Activated CD4-positive, alpha-beta T cell treated with anti-CD3 and anti-CD28 coated beads for 36 hours (primary cell): ENCODE measurements at regions of chr21 and their contacts with region 1.

Region 1: GRCh38 chr21:35045542-35046262 is 3.4 kb downstream of the RUNX1 start:
- DNase-seq: peak; percentile 64
- ATAC-seq: no peak
- H3K4me3 Mint-ChIP-seq: peak overlapping the region; percentile 87
- H3K27ac Mint-ChIP-seq: peak overlapping the region; percentile 95
- H3K4me1 Mint-ChIP-seq: peaks cover 79% of the 10 kb centered on the region
- H3K27me3 Mint-ChIP-seq: no peaks in the 10 kb centered on the region

Region 2: DNA sequence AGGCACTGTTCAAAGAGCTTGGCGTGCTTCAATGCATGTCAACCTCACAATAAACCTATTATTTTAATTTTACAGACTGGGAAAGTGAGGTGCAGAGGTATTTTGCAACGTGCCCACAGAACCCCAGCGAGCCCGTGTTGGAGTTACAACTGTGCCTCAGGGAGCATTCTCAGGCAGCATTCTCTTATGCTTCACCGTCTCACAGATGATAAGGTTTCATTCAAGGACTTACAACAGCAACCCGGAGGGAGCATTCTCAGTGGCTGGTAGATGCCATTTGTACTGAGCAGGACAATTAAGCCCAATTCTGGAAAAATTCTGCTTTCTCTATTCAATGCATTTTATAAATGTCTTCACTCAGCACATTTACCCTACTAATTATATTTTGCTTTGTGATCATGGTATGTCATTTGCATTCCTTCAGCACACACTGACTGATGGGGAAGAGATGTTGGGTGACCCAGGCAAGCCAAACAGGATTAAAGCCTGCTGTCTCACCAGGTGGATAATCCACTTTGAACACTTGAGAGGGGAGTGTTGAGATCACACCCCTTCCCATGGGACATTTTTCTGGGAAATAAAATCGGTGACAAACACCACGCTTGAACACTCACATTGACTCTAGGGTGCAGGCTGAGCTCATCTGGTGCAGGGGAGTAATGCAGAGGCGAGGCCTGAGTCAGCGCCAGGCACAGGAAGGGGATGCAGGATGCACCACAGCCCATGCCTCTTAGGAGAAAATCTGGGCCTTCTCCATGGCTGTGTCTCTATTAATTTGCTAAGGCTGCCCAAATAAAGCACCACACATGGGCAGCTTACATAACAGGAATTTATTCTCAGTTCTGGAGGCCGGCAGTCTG is 263.0 kb before region 1 on chr21:
- CTCF ChIA-PET with region 1: no interaction called
- POLR2A ChIA-PET with region 1: no interaction called
- intact Hi-C with region 1: no loop called
- DNase-seq: no peak
- ATAC-seq: no peak
- H3K4me3 Mint-ChIP-seq: no peak overlapping the region
- H3K27ac Mint-ChIP-seq: no peak overlapping the region
- H3K4me1 Mint-ChIP-seq: no peaks in the 10 kb centered on the region
- H3K27me3 Mint-ChIP-seq: no peaks in the 10 kb centered on the region

Region 3: DNA sequence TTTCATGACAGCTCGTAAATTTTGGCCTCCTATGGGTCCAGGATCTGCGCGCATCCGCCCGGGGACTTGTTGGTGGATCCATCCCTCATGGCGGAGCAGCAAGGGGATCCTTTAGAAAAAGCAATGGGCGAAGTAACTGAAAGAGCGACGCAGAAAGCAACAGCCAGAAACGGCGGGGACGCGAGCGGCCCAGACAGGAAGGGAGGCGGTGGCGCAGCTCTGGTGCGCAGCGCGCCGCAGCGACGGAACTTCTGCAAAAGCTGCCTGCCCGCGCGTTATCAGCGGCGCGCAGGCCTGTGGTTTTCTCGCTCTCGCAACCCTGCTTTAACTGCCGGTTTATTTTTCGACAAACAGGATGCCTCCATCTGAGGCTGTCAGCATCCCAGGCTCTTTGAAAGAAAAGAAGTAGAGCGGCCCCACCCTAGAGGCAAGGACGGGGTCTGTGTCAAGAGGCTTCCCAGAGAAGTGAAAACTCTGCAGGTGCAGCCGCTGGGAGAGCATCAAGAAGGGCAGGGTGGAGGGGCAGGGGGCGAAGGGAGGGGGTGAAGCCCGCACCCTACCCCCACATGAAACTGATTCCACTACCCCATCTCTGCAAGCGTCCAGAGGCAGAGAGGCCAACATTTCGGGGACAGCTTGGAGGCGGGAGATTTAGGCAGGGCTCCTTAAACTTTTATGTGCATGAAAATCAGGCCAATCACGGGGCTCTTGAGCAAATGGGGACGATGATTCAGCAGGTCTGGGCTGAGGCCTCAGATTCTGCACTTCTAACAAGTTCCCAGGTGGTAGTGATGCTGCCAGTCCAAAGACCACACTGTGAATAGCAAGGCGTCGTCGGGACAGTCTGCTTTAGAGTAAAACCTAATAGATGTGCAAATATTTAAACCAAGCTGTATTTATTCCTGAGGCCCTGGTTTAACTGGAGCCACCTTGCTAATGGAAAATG is 18.8 kb before region 1 on chr21:
- CTCF ChIA-PET with region 1: interaction called, 19 read pairs
- POLR2A ChIA-PET with region 1: interaction called, 12 read pairs
- intact Hi-C with region 1: loop called (anchors 1 kb)
- DNase-seq: peak; percentile 92
- ATAC-seq: peak; percentile 68
- H3K4me3 Mint-ChIP-seq: peak overlapping the region; percentile 75
- H3K27ac Mint-ChIP-seq: peak overlapping the region; percentile 97
- H3K4me1 Mint-ChIP-seq: peaks cover 88% of the 10 kb centered on the region
- H3K27me3 Mint-ChIP-seq: no peaks in the 10 kb centered on the region

Region 4: GRCh38 chr21:35066824-35067223 is 21.1 kb after region 1 on chr21:
- CTCF ChIA-PET with region 1: no interaction called
- POLR2A ChIA-PET with region 1: no interaction called
- intact Hi-C with region 1: no loop called
- DNase-seq: no peak
- ATAC-seq: no peak
- H3K4me3 Mint-ChIP-seq: no peak overlapping the region
- H3K27ac Mint-ChIP-seq: no peak overlapping the region
- H3K4me1 Mint-ChIP-seq: peaks cover 12% of the 10 kb centered on the region
- H3K27me3 Mint-ChIP-seq: peaks cover 2% of the 10 kb centered on the region